ENCODE measurements at regions of chr3 and their contacts with region 1.

Region 1: GRCh38 chr3:172208586-172209332 is 169.4 kb downstream of the FNDC3B start:
- DNase-seq: peak; percentile 87
- H3K4me3 ChIP-seq: peak overlapping the region in 1 of 3 experiments; percentile 27
- H3K27ac ChIP-seq: peak overlapping the region; percentile 65
- H3K4me1 ChIP-seq: peaks cover 45% of the 10 kb centered on the region
- H3K27me3 ChIP-seq: no peaks in the 10 kb centered on the region
- CTCF ChIP-seq: no peak

Region 2: DNA sequence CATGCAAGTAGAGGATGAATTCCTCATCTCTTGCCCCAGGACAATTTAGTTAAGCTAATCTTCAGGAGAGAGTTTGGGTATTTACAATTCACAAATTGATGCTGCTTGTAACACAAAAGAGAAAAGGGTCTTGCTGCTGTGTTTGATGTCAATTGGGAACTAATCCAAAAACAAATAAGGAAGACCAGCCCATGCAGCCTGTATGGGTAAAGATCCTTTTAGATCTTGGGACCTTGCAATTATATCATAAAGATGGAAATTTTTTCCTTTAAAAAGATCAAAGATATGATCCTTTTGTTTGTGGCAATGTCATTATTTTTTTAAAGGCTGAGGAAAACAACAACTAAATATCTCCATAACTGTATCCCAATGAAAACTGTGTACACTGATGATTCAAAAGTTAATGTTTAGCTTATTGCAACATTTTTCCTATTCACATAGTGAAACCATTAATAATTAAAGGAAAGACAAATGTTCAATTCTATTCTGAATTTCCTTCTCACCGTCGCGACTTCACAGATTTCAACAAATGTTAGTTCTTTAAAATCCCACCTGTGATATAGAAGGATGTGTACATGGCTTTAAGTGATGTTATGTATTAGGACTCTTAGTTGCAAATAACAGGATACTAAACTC is 325.4 kb before region 1 on chr3:
- CTCF ChIA-PET with region 1: no interaction called
- dilution Hi-C with region 1: no loop called
- in situ Hi-C with region 1: no loop called
- intact Hi-C with region 1: no loop called
- DNase-seq: no peak
- H3K4me3 ChIP-seq: no peak overlapping the region
- H3K27ac ChIP-seq: no peak overlapping the region
- H3K4me1 ChIP-seq: no peaks in the 10 kb centered on the region
- H3K27me3 ChIP-seq: no peaks in the 10 kb centered on the region
- CTCF ChIP-seq: no peak

Region 3: DNA sequence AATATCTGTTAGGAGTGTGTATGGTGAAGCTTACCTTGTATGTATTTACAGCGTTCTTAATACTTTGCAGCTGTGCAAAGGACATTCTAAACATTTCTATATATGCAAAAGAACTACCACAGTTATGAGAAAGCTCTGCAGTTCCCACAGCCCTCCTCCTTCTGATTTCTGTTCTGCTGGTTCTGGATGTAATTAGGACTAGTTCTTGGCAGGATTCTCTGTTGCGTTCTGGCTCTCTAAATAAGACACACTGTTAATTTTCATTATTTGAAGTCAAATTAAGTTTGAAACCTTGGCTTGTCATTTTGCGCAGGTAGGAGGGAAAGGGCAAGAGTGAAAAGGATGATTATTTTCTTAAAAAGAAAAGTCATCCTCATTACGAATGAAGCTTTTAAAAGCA is 93.0 kb before region 1 on chr3:
- CTCF ChIA-PET with region 1: no interaction called
- dilution Hi-C with region 1: no loop called
- in situ Hi-C with region 1: no loop called
- intact Hi-C with region 1: no loop called
- DNase-seq: no peak
- H3K4me3 ChIP-seq: no peak overlapping the region
- H3K27ac ChIP-seq: no peak overlapping the region
- H3K4me1 ChIP-seq: peaks cover 4% of the 10 kb centered on the region
- H3K27me3 ChIP-seq: no peaks in the 10 kb centered on the region
- CTCF ChIP-seq: no peak

Region 4: DNA sequence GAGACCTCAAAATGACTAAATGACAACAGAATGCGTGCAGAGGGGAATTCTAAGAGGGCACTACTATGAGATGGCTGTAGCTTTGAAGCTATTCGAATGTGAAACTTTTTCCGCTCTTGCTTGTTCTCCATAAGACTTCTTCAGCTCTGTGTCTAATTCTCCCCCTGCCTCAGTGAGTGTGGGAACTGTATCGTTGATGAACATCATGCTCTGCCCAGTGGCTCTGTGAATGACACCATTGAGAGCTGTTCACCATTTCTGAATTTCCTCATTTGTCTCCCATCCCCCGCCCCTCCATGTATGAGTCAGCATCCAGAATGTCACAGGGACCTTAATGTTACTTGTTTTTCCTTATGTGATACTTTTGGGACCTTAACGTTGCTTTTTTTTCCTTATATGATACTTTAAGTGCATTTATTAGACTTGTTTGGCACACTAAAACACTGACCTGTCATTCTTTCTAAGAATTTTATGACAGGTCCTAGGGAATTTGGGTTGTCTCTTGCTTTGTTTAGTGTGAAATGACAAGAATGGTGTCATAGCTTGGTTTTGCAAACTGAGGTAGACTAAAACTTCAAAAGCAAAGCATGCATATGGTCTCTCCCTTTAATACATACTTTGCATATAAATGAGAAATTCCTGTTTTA is 69.8 kb before region 1 on chr3:
- CTCF ChIA-PET with region 1: no interaction called
- dilution Hi-C with region 1: no loop called
- in situ Hi-C with region 1: no loop called
- intact Hi-C with region 1: loop called (anchors 5 kb)
- DNase-seq: peak; percentile 58
- H3K4me3 ChIP-seq: no peak overlapping the region
- H3K27ac ChIP-seq: peak overlapping the region; percentile 97
- H3K4me1 ChIP-seq: peaks cover 81% of the 10 kb centered on the region
- H3K27me3 ChIP-seq: no peaks in the 10 kb centered on the region
- CTCF ChIP-seq: no peak

Region 5: GRCh38 chr3:172145031-172145686 is 63.6 kb before region 1 on chr3:
- CTCF ChIA-PET with region 1: no interaction called
- dilution Hi-C with region 1: loop called (anchors 5 kb)
- in situ Hi-C with region 1: no loop called
- intact Hi-C with region 1: loop called (anchors 5 kb)
- DNase-seq: no peak
- H3K4me3 ChIP-seq: no peak overlapping the region
- H3K27ac ChIP-seq: no peak overlapping the region
- H3K4me1 ChIP-seq: peaks cover 42% of the 10 kb centered on the region
- H3K27me3 ChIP-seq: no peaks in the 10 kb centered on the region
- CTCF ChIP-seq: no peak

Region 6: DNA sequence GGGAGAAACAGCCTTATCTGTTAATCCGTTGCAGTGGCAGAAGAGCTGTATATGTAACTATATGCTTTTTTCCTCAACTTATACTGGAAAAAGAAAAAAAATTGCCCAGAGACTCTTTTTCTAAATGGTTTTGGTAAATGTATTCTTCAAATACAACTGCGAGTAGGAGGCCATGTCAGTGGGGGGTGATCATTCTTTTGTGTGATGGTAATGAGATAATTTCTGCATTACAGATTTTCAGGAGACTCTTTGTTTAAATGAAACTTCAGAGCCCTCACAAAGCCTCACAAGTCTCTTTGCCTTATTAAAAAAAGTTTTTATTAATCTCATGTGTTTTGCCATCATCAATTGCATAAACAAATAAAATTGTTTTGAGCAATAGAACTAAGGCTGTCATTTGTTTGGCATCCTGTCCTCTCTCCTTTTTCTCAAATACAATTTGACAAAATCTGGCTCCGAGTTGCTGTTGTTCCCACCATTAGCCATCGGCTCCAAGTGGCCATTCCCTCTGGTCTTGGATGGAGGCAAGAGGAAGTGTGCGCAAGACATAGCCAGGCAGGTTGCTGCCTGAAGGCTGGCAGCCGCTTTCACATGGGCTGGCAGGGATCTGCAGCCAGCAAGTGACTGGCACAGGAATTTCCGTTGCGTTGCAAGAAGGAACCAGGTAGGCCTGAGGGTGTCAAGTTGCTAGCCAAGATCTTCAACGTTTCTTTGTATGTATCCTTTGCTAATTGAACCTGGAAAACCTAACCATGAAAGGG is 52.7 kb before region 1 on chr3:
- CTCF ChIA-PET with region 1: no interaction called
- dilution Hi-C with region 1: no loop called
- in situ Hi-C with region 1: no loop called
- intact Hi-C with region 1: loop called (anchors 2 kb)
- DNase-seq: peak; percentile 95
- H3K4me3 ChIP-seq: no peak overlapping the region
- H3K27ac ChIP-seq: peak overlapping the region; percentile 87
- H3K4me1 ChIP-seq: peaks cover 72% of the 10 kb centered on the region
- H3K27me3 ChIP-seq: no peaks in the 10 kb centered on the region
- CTCF ChIP-seq: no peak

Region 7: DNA sequence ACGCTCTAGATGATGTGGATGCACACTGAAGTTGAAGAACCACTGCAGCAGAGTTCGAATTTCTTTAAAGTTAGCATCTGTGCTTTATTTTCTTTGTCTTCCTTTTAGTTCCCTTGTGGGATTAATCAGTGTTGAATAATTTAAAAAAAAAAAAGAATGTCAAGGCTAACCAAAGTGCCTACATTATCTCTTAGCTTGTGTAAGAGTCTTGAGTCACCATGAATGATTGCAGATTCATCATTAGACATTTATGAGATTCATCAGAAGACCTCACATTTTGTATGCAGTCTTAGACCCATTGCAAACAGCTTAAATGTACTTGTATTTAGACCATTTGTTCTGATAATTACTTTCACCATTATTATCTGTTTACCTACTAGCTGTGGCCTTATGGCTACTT is 12.8 kb after region 1 on chr3:
- CTCF ChIA-PET with region 1: no interaction called
- dilution Hi-C with region 1: no loop called
- in situ Hi-C with region 1: no loop called
- intact Hi-C with region 1: loop called (anchors 1 kb)
- DNase-seq: peak; percentile 79
- H3K4me3 ChIP-seq: no peak overlapping the region
- H3K27ac ChIP-seq: peak overlapping the region; percentile 18
- H3K4me1 ChIP-seq: peaks cover 37% of the 10 kb centered on the region
- H3K27me3 ChIP-seq: no peaks in the 10 kb centered on the region
- CTCF ChIP-seq: no peak

Measured in mammary epithelial cell (primary cell).